CD4-positive, alpha-beta memory T cell (primary cell): ENCODE measurements at regions of chr19 and their contacts with region 1.

Region 1: DNA sequence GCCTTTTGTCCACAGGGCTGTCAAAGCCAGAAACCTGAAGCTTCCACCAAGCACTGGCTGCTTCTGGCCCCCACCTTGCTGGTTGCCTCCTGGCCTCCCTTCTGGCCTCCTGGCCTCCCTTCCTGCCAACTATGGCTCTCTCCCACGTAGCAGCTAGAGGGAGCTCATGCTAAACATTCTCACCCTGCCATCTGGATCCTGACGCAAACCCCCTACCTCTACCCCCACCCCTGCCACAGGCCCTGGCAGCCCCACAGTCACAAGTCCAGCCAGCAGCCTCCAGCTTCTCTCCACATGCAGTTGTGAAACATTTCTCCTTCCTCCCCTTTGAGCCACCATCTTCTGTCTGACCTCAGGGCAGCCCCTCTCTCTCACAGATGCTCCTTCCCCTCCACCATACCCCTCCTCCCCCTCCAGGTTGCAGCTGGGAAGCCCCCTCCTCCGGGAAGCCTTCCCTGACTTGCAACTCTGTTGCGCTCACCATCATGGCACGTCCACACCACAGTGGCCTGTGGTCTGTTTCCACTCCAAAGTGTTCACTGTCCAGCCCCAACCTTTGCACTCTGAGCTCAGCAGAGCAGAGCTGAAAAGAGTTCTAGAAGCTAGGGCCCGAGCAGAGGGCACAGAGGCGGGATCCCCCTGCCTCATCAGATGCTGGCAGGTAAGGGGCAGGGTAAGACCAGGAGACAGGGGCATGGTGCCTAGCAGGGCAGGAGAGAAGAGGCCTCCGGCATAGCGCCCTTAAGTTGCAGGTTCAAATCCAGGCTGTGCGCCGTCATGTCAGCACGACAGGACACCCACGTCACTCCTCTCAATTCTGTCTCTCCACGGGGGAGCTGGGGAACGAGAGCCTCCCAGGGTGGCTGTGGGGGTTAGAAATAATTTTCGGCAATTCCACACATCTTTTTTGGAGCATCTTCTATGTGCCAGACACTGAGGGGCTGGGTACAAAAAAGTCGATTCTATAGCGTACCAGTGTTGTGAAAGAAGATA is 7.3 kb downstream of the ADGRL1 start:
- DNase-seq: no peak
- H3K4me3 ChIP-seq: no peak overlapping the region
- H3K4me3 Mint-ChIP-seq: no peak overlapping the region
- H3K27ac ChIP-seq: no peak overlapping the region
- H3K27ac Mint-ChIP-seq: no peak overlapping the region
- H3K4me1 ChIP-seq: peaks cover 3% of the 10 kb centered on the region
- H3K4me1 Mint-ChIP-seq: peaks cover 15 to 47% (median 33%) of the 10 kb centered on the region in 4 donors
- H3K27me3 ChIP-seq: no peaks in the 10 kb centered on the region
- H3K27me3 Mint-ChIP-seq: peaks cover 0 to 1% of the 10 kb centered on the region in 2 donors

Region 2: DNA sequence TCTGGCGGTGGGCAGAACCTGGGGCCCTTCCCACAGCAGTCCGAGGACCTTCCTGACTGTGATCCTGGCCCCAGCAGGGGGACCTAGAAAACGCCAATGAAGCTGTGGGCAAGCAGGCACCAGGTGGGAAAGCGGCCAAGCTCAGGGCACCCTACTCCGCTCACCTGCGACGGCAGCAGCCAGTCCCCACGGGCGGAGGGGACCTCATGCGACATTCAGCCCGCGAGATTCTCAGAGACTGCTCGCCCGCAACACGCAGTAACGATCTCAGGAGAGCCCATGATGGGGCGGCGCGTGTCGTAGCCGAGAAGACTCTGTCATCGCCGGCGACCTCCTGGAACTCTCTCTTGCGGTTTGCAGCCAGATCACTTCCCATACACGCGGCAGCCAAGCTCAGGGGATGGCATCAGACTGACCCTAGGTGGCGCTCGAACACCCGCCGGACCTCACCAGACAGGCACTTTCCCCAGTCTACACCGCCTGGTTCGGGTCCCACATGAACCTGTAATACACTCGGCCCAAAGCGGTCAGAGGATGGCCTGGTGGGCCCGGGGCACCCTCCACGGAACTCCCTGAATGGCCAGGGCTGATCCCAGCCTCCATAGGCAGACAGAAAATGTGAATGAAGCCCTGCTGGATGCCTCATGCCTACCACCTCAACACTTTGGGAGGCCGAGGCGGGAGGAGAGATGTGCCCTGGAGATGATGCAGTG is 1558.6 kb before region 1 on chr19:
- CTCF ChIA-PET with region 1: no interaction called
- POLR2A ChIA-PET with region 1: no interaction called
- intact Hi-C with region 1: no loop called
- DNase-seq: peak; percentile 71 to 82 (median 75)
- H3K4me3 ChIP-seq: no peak overlapping the region
- H3K4me3 Mint-ChIP-seq: peak overlapping the region; percentile 68 to 82 (median 76)
- H3K27ac ChIP-seq: no peak overlapping the region
- H3K27ac Mint-ChIP-seq: peak overlapping the region; percentile 14 to 92 (median 54)
- H3K4me1 ChIP-seq: peaks cover 18% of the 10 kb centered on the region
- H3K4me1 Mint-ChIP-seq: peaks cover 11 to 15% (median 14%) of the 10 kb centered on the region in 4 donors
- H3K27me3 ChIP-seq: no peaks in the 10 kb centered on the region
- H3K27me3 Mint-ChIP-seq: no peaks in the 10 kb centered on the region

Region 3: GRCh38 chr19:14155371-14155770 is 43.3 kb before region 1 on chr19:
- CTCF ChIA-PET with region 1: no interaction called
- POLR2A ChIA-PET with region 1: no interaction called
- intact Hi-C with region 1: no loop called
- DNase-seq: no peak
- H3K4me3 ChIP-seq: no peak overlapping the region
- H3K4me3 Mint-ChIP-seq: no peak overlapping the region
- H3K27ac ChIP-seq: no peak overlapping the region
- H3K27ac Mint-ChIP-seq: peak overlapping the region in 1 of 7 donors; percentile 48
- H3K4me1 ChIP-seq: peaks cover 4% of the 10 kb centered on the region
- H3K4me1 Mint-ChIP-seq: peaks cover 0 to 12% (median 3%) of the 10 kb centered on the region in 4 donors
- H3K27me3 ChIP-seq: no peaks in the 10 kb centered on the region
- H3K27me3 Mint-ChIP-seq: no peaks in the 10 kb centered on the region

Region 4: DNA sequence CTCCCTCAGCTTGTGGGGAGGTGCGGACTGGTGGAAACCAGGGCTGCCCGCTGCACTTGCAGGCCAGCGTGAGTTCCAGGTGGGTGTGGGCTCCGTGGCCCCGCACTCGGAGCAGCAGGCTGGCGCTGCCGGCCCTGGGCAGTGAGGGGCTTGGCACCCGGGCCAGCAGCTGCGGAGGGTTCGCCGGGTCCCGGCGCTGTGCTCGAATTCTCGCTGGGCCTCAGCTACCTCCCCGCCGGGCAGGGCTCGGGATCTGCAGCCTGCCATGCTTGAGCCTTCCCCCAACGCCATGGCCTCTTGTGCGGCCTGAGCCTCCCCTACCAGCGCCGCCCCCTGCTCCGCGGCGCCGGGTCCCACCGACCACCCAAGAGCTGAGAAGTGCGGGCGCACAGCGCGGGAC is 78.9 kb after region 1 on chr19:
- CTCF ChIA-PET with region 1: interaction called, 3 read pairs
- POLR2A ChIA-PET with region 1: no interaction called
- intact Hi-C with region 1: loop called (anchors 10 kb)
- DNase-seq: no peak
- H3K4me3 ChIP-seq: no peak overlapping the region
- H3K4me3 Mint-ChIP-seq: no peak overlapping the region
- H3K27ac ChIP-seq: no peak overlapping the region
- H3K27ac Mint-ChIP-seq: no peak overlapping the region
- H3K4me1 ChIP-seq: peaks cover 11% of the 10 kb centered on the region
- H3K4me1 Mint-ChIP-seq: peaks cover 8 to 18% (median 10%) of the 10 kb centered on the region in 4 donors
- H3K27me3 ChIP-seq: no peaks in the 10 kb centered on the region
- H3K27me3 Mint-ChIP-seq: peaks cover 2 to 5% of the 10 kb centered on the region in 2 donors